Naive thymus-derived CD4-positive, alpha-beta T cell (primary cell): ENCODE measurements at regions of chr3 and their contacts with region 1.

Region 1: GRCh38 chr3:51371943-51372557 is 13.0 kb upstream of the MANF start:
- DNase-seq: peak in 8 of 9 donors; percentile 22 to 66 (median 49)
- ATAC-seq: peak; percentile 50
- H3K4me3 ChIP-seq: no peak overlapping the region
- H3K4me3 Mint-ChIP-seq: no peak overlapping the region
- H3K27ac ChIP-seq: no peak overlapping the region
- H3K27ac Mint-ChIP-seq: no peak overlapping the region
- H3K4me1 ChIP-seq: no peaks in the 10 kb centered on the region
- H3K4me1 Mint-ChIP-seq: peaks cover 0 to 7% (median 5%) of the 10 kb centered on the region in 7 donors
- H3K27me3 ChIP-seq: no peaks in the 10 kb centered on the region
- H3K27me3 Mint-ChIP-seq: peaks cover 0 to 4% (median 3%) of the 10 kb centered on the region in 5 donors

Region 2: GRCh38 chr3:50674349-50675178 is 697.5 kb before region 1 on chr3 and contains the start of gene DOCK3:
- CTCF ChIA-PET with region 1: interaction called, 3 read pairs
- POLR2A ChIA-PET with region 1: no interaction called
- intact Hi-C with region 1: loop called (anchors 1 to 2 kb)
- DNase-seq: peak; percentile 30 to 77 (median 69)
- ATAC-seq: peak; percentile 92
- H3K4me3 ChIP-seq: peak within 1 kb of the TSS; percentile 63
- H3K4me3 Mint-ChIP-seq: peak within 1 kb of the TSS; percentile 71 to 87 (median 81)
- H3K27ac ChIP-seq: no peak within 1 kb of the TSS
- H3K27ac Mint-ChIP-seq: peak within 1 kb of the TSS in 4 of 9 donors; percentile 4 to 58 (median 40)
- H3K4me1 ChIP-seq: no peaks in the 10 kb centered on the region
- H3K4me1 Mint-ChIP-seq: peaks cover 4 to 10% (median 6%) of the 10 kb centered on the region in 7 donors
- H3K27me3 ChIP-seq: peaks cover 0 to 3% of the 10 kb centered on the region in 2 donors
- H3K27me3 Mint-ChIP-seq: peaks cover 17 to 65% (median 32%) of the 10 kb centered on the region in 5 donors
- total RNA-seq, gene DOCK3: 1.5 to 2.9 (median 1.9) TPM

Region 3: GRCh38 chr3:50862221-50862620 is 509.8 kb before region 1 on chr3:
- CTCF ChIA-PET with region 1: no interaction called
- POLR2A ChIA-PET with region 1: no interaction called
- intact Hi-C with region 1: no loop called
- DNase-seq: no peak
- ATAC-seq: no peak
- H3K4me3 ChIP-seq: no peak overlapping the region
- H3K4me3 Mint-ChIP-seq: no peak overlapping the region
- H3K27ac ChIP-seq: no peak overlapping the region
- H3K27ac Mint-ChIP-seq: no peak overlapping the region
- H3K4me1 ChIP-seq: no peaks in the 10 kb centered on the region
- H3K4me1 Mint-ChIP-seq: no peaks in the 10 kb centered on the region
- H3K27me3 ChIP-seq: no peaks in the 10 kb centered on the region
- H3K27me3 Mint-ChIP-seq: peaks cover 0 to 21% (median 4%) of the 10 kb centered on the region in 5 donors

Region 4: DNA sequence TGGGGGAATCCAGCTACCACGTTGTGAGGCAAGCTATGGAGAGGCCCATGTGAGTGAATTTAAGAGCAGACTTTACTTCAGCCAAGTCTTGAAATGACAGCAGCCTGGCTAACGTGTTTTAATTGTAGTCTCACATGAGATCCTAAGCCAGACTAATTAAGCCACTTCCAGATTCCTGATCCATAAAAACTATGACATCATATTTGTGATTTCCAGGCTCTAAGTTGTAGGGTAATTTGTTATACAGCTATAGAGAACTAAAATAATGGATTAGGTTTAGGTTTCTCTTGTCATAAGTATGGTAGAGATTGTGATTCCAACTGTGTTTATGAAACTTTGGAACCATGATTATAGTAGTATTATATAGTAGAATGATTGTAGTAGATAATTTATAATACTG is 367.8 kb before region 1 on chr3:
- CTCF ChIA-PET with region 1: no interaction called
- POLR2A ChIA-PET with region 1: no interaction called
- intact Hi-C with region 1: loop called in 1 of 2 experiments (anchors 1 kb)
- DNase-seq: no peak
- ATAC-seq: no peak
- H3K4me3 ChIP-seq: no peak overlapping the region
- H3K4me3 Mint-ChIP-seq: no peak overlapping the region
- H3K27ac ChIP-seq: no peak overlapping the region
- H3K27ac Mint-ChIP-seq: no peak overlapping the region
- H3K4me1 ChIP-seq: no peaks in the 10 kb centered on the region
- H3K4me1 Mint-ChIP-seq: peaks cover 0 to 13% (median 6%) of the 10 kb centered on the region in 7 donors
- H3K27me3 ChIP-seq: no peaks in the 10 kb centered on the region
- H3K27me3 Mint-ChIP-seq: peaks cover 0 to 6% (median 0%) of the 10 kb centered on the region in 5 donors

Region 5: DNA sequence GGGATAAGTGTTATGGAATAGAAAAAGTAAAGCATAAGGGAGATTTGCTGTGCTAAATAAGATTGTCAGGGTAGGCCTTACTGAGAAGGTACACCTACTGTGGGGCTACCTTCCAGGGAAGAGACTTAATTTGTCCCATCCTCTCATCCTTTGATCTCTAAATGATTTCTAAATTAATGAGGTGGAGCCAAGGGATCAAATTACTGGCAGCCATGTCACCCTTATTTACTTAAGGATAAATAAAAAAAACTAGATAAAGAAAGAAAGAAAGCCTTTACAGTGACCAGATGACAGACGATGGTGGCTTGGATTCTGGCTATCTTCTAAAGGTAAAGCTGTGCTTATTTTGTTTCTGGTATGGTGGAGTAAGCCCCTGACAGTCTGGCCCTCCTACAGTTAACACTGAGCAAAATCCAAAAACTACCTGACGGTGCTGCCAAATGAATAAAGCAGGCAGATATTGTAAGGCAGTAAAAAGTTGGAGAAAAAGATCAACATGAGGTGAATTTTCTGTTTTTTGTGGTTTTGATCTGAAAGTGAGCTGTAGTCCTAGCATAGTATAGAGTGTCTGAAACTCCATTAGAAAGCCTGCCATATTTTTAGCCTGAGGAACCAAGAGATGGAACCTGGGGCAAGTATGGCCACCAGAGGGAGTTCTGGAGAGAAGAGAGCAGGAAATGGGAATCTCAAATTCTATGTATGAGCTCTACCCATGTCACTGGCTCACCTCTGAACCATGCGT is 272.1 kb before region 1 on chr3:
- CTCF ChIA-PET with region 1: no interaction called
- POLR2A ChIA-PET with region 1: no interaction called
- intact Hi-C with region 1: loop called in 1 of 2 experiments (anchors 2 kb)
- DNase-seq: peak in 1 of 9 donors; percentile 5
- ATAC-seq: peak; percentile 20
- H3K4me3 ChIP-seq: no peak overlapping the region
- H3K4me3 Mint-ChIP-seq: peak overlapping the region in 1 of 10 donors; percentile 43
- H3K27ac ChIP-seq: no peak overlapping the region
- H3K27ac Mint-ChIP-seq: peak overlapping the region in 3 of 9 donors; percentile 45 to 82 (median 75)
- H3K4me1 ChIP-seq: no peaks in the 10 kb centered on the region
- H3K4me1 Mint-ChIP-seq: peaks cover 3 to 27% (median 16%) of the 10 kb centered on the region in 7 donors
- H3K27me3 ChIP-seq: no peaks in the 10 kb centered on the region
- H3K27me3 Mint-ChIP-seq: peaks cover 0 to 2% (median 0%) of the 10 kb centered on the region in 5 donors

Region 6: GRCh38 chr3:51141573-51141972 is 230.5 kb before region 1 on chr3:
- CTCF ChIA-PET with region 1: no interaction called
- POLR2A ChIA-PET with region 1: no interaction called
- intact Hi-C with region 1: no loop called
- DNase-seq: no peak
- ATAC-seq: no peak
- H3K4me3 ChIP-seq: no peak overlapping the region
- H3K4me3 Mint-ChIP-seq: no peak overlapping the region
- H3K27ac ChIP-seq: no peak overlapping the region
- H3K27ac Mint-ChIP-seq: peak overlapping the region in 3 of 9 donors; percentile 15 to 71 (median 39)
- H3K4me1 ChIP-seq: peaks cover 0 to 4% of the 10 kb centered on the region in 2 donors
- H3K4me1 Mint-ChIP-seq: peaks cover 0 to 21% (median 12%) of the 10 kb centered on the region in 7 donors
- H3K27me3 ChIP-seq: no peaks in the 10 kb centered on the region
- H3K27me3 Mint-ChIP-seq: no peaks in the 10 kb centered on the region

Region 7: GRCh38 chr3:51269466-51269865 is 102.6 kb before region 1 on chr3:
- CTCF ChIA-PET with region 1: interaction called, 5 read pairs
- POLR2A ChIA-PET with region 1: no interaction called
- intact Hi-C with region 1: loop called in 1 of 2 experiments (anchors 1 kb)
- DNase-seq: no peak
- ATAC-seq: no peak
- H3K4me3 ChIP-seq: no peak overlapping the region
- H3K4me3 Mint-ChIP-seq: peak overlapping the region in 5 of 10 donors; percentile 2 to 80 (median 21)
- H3K27ac ChIP-seq: no peak overlapping the region
- H3K27ac Mint-ChIP-seq: peak overlapping the region in 6 of 9 donors; percentile 45 to 99 (median 96)
- H3K4me1 ChIP-seq: peaks cover 6 to 32% of the 10 kb centered on the region in 2 donors
- H3K4me1 Mint-ChIP-seq: peaks cover 10 to 59% (median 51%) of the 10 kb centered on the region in 7 donors
- H3K27me3 ChIP-seq: no peaks in the 10 kb centered on the region
- H3K27me3 Mint-ChIP-seq: no peaks in the 10 kb centered on the region

Region 8: DNA sequence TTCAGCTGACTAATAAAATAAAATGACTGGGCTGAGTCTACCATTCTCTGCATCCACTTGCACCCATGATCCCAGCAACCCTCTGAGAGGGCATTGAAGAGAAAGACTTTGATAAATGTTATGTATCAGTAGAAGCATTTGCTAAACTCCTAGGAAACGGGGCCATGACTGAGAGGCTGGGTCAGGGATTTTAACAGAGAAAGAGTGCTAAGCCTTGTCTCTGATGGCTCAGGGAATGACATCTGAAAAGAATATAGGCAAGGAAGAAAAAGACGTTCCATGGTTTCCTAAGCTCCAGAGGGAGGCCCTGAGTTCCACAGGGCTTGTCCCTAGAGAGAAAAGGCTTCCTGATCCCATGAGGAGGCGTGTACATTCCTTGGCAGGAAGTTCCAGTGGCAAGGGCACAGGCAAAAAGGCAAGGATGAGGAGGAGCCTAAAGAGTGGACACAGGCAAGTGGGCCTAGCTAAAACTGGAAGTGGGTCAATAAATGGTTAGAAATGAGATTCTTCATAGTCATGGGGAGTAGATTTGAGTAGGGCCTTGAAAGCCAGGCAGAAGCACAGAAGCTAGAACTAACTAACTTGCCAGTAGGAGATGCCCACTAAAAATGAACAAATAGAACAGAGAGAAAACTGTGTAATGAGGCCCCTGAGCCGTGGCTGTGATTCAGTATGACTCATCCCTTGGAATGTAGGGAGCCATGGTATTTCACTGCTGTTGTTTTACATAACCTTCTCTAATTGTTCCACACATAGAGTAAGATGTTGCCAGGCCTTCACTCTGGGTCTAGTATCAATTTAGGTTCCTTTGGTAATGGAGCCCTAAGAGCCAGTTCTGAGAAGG is 31.8 kb before region 1 on chr3:
- CTCF ChIA-PET with region 1: no interaction called
- POLR2A ChIA-PET with region 1: no interaction called
- intact Hi-C with region 1: no loop called
- DNase-seq: no peak
- ATAC-seq: no peak
- H3K4me3 ChIP-seq: no peak overlapping the region
- H3K4me3 Mint-ChIP-seq: no peak overlapping the region
- H3K27ac ChIP-seq: no peak overlapping the region
- H3K27ac Mint-ChIP-seq: no peak overlapping the region
- H3K4me1 ChIP-seq: no peaks in the 10 kb centered on the region
- H3K4me1 Mint-ChIP-seq: no peaks in the 10 kb centered on the region
- H3K27me3 ChIP-seq: no peaks in the 10 kb centered on the region
- H3K27me3 Mint-ChIP-seq: no peaks in the 10 kb centered on the region

Region 9: DNA sequence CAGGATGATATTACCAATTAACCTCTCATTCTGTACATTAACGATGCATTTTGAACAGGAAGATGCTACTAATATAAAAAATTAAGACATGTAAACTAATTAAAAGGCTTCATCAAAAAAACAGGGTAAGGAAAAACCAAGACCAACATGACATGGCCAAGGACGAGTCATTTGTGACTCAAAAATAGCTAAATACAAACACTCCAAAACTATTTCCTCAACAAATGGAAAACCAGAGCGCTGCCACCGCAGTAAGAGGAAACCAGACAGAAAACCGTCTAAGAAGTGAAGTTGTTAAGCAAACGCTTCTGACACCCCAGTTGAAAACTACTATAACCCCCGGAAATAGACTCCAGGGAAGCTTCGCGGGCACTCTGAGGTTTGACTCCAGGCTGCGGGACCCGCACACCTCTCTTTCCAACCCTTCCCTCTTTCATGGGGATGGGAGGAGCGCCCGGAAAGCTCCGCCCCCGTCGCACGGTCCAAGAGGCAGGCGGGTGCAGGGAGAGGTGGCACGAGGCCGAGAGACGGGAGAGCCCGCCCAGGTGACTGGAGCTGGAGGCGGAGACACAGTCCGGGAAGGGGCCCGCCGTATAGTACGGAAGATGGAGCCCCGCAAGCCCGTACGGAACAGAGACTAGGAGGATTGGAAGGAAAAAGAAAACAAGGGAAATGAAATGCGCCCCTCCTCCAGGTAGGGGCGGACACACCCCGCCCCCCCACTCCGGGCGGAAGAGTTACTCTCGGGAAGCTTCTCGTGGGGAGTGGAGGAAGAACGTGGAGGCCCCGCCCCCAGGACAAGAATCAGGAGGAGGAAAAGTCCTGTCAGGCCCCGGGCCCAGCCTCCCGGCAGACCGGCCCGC is 127.1 kb after region 1 on chr3:
- CTCF ChIA-PET with region 1: no interaction called
- POLR2A ChIA-PET with region 1: no interaction called
- intact Hi-C with region 1: no loop called
- DNase-seq: peak; percentile 52 to 90 (median 73)
- ATAC-seq: peak; percentile 58
- H3K4me3 ChIP-seq: peak overlapping the region; percentile 84
- H3K4me3 Mint-ChIP-seq: peak overlapping the region; percentile 87 to 100 (median 98)
- H3K27ac ChIP-seq: peak overlapping the region; percentile 90
- H3K27ac Mint-ChIP-seq: peak overlapping the region; percentile 90 to 99 (median 94)
- H3K4me1 ChIP-seq: peaks cover 10 to 14% of the 10 kb centered on the region in 2 donors
- H3K4me1 Mint-ChIP-seq: peaks cover 4 to 38% (median 35%) of the 10 kb centered on the region in 7 donors
- H3K27me3 ChIP-seq: no peaks in the 10 kb centered on the region
- H3K27me3 Mint-ChIP-seq: peaks cover 0 to 2% (median 0%) of the 10 kb centered on the region in 5 donors